ENCODE measurements at regions of chr1 and their contacts with region 1.

Region 1: GRCh38 chr1:112715264-112716053 is at the start of gene PPM1J:
- DNase-seq: peak; percentile 99
- ATAC-seq: peak; percentile 88 to 93
- total RNA-seq, gene PPM1J: 4.9 to 5.1 TPM

Region 2: GRCh38 chr1:112496290-112496689 is 219.2 kb before region 1 on chr1:
- intact Hi-C with region 1: no loop called
- DNase-seq: no peak
- ATAC-seq: no peak

Region 3: DNA sequence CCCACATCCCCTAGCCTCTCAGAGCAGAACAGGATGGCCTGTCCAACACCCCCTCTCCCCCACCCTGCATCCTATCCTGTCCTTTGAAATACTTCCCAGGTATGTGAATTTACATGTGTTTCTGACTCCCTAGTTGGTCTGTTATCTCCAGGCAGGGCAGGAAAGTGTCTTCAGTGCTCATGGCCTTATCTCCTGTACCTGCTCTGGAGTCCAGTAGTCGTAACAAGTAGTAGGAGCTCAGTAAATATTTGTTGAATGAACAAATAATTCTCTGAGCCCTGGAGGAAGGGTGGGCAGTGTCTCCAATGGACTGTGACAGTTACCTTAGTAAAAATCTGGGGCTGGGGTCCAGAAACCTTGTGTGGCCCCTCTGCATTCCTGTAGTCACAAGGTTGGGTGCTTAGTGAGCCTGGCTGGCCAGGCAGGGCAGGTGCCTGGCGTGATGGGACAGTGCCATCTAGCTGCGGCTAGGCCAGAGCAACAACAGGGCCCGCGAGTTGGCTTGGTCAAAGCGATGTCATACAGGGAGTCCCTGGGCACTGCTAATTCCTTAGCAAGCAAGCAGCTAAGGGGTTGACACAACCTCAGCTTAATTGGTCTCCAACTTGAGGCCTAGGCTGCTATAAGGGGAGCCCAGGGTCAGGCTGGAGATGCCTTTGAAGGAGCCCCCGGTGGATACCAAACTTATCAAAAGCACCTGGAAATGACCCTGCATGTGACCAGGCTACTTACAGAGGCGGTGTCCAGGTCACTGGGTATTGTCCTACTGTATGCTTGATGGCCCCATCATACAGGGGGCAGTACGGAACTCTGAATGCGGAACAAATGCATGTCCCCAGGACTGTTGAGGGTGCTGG is 88.7 kb after region 1 on chr1:
- intact Hi-C with region 1: loop called (anchors 1 to 2 kb)
- DNase-seq: peak; percentile 73
- ATAC-seq: peak; percentile 90 to 92

Region 4: GRCh38 chr1:112955781-112956543 is 240.5 kb after region 1 on chr1 and contains the start of gene SLC16A1:
- intact Hi-C with region 1: loop called in 1 of 2 experiments (anchors 5 kb)
- DNase-seq: peak; percentile 95
- ATAC-seq: peak; percentile 94 to 97
- total RNA-seq, gene SLC16A1: 54.0 to 80.0 TPM

Region 5: DNA sequence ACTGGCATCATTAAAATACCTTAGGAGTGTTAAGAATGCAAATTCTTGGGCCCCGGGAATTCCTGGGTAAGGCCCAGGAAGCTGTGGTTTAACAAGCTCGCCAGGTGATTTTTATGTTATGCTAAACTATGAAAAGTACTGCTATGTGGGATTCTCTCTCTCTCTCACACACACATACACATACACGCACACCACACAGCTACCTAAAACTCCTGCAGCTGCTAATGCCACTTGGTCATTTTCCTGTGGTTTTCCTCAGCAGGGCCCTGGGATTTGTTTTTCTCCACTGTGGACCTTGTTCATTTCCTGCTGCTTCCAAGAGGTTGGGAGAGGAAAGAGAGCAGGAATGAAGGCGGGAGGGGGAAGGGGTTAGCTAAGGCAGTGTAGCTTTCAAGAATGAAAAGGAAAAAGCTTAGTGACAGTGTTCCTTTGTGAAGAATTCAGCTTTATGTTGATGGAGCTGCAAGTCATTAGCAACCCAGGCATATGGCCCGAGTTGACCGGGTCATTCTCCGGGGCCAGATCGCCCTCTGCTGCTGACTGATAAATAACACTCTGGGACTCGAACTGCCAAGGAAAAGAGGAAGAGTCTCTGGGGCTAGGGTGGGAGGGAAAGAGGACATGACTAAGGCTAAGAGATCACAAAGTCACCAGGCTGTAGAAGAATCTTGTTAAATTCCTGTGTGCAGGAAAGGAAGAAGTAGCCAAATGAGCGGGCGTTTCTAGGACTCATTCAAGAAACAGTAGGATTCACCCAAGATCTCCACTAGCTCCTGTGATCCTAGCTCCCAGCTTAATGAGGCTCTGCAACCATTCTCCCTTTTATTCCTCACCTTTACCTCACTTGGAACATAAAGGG is 327.1 kb after region 1 on chr1:
- intact Hi-C with region 1: loop called in 1 of 2 experiments (anchors 2 kb)
- DNase-seq: peak; percentile 81
- ATAC-seq: peak; percentile 89 to 93

Region 6: GRCh38 chr1:113072757-113073478 is 357.5 kb after region 1 on chr1 and contains the start of gene LRIG2:
- intact Hi-C with region 1: loop called in 1 of 2 experiments (anchors 5 kb)
- DNase-seq: peak; percentile 99
- ATAC-seq: peak; percentile 99 to 100
- total RNA-seq, gene LRIG2: 8.7 to 9.9 TPM

Region 7: GRCh38 chr1:113677250-113678158 is 962.0 kb after region 1 on chr1:
- intact Hi-C with region 1: loop called in 1 of 2 experiments (anchors 10 kb)
- DNase-seq: peak; percentile 25
- ATAC-seq: peak in 1 of 2 donors; percentile 50